GM10248 (cell line): ENCODE measurements at regions of chr17 and their contacts with region 1.

Region 1: DNA sequence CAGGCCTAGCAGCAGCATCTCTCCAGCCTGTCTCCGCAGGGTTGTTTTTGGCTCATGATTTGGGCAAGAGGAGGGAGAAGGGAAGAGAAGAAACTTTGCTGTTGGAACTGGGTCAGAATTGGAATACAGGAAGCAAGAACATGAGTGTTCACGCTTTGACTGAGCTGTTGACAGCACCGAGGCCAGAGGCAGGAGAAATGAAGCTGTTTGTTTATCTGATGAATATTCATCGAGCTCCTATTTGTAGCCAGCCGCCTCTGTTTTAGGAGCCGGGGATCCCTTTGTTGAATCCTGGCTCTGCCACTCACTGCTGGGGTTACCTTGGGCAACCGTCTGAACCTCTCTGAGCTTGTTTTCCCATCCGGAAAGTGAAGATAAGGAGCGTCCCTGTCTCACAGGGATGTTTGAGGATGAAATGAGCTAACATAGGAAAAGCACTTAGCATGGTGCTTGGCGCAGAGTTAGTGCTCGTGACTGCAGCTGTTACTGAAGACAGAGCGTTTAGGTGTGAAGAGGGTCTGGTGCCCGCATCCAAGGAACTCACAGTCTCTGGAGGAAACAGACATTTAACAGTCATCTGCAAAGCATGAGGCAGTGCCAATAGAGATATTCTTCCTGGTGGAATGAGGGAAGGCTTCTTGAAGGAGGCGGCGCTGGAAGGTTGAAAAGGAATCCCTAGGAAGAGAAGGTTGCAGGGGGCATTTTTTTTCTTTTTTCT is 29.2 kb downstream of the RAP1GAP2 start:
- DNase-seq: no peak
- CTCF ChIP-seq: no peak

Region 2: GRCh38 chr17:2700516-2701141 is 124.8 kb before region 1 on chr17:
- CTCF ChIA-PET with region 1: no interaction called
- POLR2A ChIA-PET with region 1: no interaction called
- DNase-seq: no peak
- CTCF ChIP-seq: no peak

Region 3: GRCh38 chr17:2770129-2770528 is 55.3 kb before region 1 on chr17:
- CTCF ChIA-PET with region 1: no interaction called
- POLR2A ChIA-PET with region 1: no interaction called
- DNase-seq: no peak
- CTCF ChIP-seq: no peak

Region 4: DNA sequence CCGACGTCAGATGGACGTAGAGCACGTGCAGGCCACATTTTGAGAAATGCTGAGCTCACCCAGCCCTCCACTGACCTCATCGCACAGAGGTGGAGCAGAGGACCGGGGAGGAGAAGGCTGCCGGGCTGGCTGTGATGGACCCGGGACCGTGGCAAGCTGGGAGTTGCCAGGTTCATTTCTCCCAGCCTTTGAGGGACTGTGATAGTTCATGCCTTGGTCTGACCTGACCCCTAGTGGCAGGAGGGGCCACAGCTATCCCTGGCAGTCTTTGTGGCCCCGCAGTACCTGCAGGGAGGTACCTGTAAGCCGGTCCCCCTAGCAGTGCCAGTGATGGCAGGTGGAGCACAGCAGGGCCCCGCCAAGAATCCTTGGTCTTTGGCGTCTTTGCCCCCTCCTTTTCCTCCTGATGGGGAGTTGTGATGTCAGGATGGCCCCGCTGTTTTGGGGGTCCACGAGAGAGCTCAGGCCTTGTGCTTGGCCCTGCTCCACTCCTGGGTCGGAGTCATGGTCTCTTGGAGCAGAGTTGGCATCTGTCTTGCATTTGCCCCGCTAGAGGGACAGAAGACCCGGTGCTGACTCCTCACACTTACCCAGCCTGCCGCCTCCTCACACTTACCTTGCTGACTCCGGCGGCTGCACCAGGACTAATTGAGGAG is 187.6 kb after region 1 on chr17:
- CTCF ChIA-PET with region 1: interaction called, 11 read pairs
- POLR2A ChIA-PET with region 1: no interaction called
- DNase-seq: peak; percentile 83
- CTCF ChIP-seq: peak; percentile 90